ENCODE measurements at regions of chr1 and their contacts with region 1.

Region 1: DNA sequence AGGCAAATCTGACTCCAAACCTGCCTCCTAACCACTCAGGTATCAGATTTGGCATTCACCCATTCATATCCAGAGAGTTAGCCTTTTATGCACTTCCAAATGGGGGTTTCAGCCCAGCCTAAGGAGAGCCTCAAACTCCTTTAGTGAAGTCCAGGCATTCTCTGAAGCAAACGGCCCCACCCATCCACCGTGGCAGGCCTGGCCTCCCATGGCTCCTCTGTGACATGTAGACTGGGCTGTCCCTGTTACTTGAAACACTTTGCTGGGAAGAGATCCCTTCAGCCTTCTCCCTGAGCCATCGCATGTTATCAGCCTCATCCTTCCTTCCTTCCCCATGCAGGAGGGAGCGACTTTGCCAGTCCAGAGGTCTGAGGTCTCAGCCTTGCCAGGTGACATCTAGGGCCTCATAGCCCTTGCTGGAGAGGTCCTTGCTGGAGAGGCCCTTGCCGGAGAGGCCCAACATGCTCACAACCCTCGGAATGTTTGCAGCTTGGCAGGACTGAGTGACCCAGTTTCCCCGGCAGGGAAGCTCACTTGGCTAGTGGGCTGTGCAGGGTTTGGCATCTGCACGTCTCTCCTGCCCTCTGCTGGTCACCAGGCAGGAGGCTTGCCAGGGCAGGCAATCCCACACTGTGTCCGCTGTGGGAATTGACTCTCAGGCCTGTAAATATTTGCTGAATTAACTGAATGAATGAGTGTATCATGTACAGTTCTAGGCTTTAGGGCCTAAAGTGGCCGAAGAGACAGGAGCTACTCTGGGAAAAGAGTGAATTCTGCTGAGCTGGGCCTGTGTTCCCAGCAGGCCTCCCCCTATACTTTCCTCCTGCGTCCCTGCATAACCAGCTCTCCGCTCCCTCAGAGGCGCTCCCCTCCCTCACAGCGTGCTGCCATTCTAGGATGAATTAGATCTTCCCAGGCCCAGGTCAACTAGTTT is 26.7 kb upstream of the RBM15 start:
- DNase-seq: peak; percentile 26 to 80
- H3K4me3 ChIP-seq: no peak overlapping the region
- H3K27ac ChIP-seq: no peak overlapping the region
- H3K4me1 ChIP-seq: no peaks in the 10 kb centered on the region
- H3K27me3 ChIP-seq: no peaks in the 10 kb centered on the region
- CTCF ChIP-seq: peak; percentile 83 to 92 (median 91)

Region 2: GRCh38 chr1:110203021-110203661 is 109.3 kb before region 1 on chr1:
- intact Hi-C with region 1: loop called (anchors 1 kb)
- DNase-seq: peak in 1 of 2 donors; percentile 81
- H3K4me3 ChIP-seq: no peak overlapping the region
- H3K27ac ChIP-seq: no peak overlapping the region
- H3K4me1 ChIP-seq: no peaks in the 10 kb centered on the region
- H3K27me3 ChIP-seq: no peaks in the 10 kb centered on the region
- CTCF ChIP-seq: peak; percentile 70 to 94 (median 79)